CD14-positive monocyte (primary cell): ENCODE measurements at regions of chr14 and their contacts with region 1.

Region 1: DNA sequence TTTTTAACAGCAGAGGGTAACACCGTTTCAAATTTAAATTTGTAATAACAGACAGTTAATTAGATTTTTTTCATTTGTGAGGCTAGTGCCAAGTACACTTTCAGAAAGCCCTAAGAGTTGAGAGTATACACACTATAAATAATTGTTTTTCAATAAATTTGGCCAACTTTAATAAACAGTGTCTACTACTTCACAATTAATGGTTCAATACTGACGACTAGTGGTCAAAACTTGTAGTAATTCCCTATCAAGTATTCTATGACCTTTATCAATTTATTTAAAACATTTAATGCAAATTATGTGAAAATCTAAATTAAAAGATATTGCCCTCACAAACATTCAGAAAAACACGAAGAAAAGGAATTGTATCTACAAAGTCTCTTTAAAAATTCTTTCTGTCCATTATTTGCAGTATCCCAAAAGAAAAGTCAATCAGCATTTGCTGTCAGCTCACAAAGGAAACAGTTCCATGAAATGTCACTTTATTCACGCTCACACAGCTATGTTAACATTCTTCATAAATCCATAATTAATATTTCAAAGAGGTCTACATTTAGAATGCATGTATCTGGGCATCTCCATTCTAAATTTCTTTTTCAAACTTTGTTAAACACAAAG is 91.2 kb downstream of the CEP128 start:
- DNase-seq: peak in 2 of 3 donors; percentile 3 to 30
- H3K4me3 ChIP-seq: no peak overlapping the region
- H3K4me3 Mint-ChIP-seq: no peak overlapping the region
- H3K27ac ChIP-seq: no peak overlapping the region
- H3K27ac Mint-ChIP-seq: no peak overlapping the region
- H3K4me1 ChIP-seq: no peaks in the 10 kb centered on the region
- H3K4me1 Mint-ChIP-seq: no peaks in the 10 kb centered on the region
- H3K27me3 ChIP-seq: no peaks in the 10 kb centered on the region
- H3K27me3 Mint-ChIP-seq: no peaks in the 10 kb centered on the region
- CTCF ChIP-seq: peak; percentile 83

Region 2: DNA sequence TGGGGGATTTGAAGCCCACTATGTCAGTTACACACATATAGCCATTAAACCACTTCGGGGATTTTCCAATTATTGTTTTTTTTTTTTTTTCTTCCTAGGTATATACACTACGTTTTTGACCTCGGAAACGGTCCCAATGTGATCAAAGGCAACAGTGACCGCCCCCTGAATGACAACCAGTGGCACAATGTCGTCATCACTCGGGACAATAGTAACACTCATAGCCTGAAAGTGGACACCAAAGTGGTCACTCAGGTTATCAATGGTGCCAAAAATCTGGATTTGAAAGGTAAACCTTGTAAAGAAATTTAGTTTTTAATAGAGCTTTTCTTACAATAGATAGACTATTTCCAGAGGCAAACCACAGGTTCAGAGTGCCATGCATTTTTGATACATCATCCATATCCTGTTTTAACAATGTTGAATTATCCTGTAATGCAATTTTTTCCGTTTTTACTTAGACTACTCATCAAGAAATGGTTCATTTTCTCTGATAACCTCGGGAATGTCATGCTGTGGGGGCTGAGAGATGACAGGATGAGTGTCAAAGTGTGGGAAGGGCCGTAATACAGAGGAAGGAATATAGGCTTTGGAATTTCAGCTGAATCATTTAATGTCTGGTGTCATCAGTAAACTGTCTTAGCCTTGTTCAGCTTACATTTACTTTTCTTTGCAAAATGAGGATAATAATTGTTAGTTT is 1883.0 kb before region 1 on chr14:
- intact Hi-C with region 1: loop called (anchors 5 to 10 kb)
- DNase-seq: no peak
- H3K4me3 ChIP-seq: no peak overlapping the region
- H3K4me3 Mint-ChIP-seq: no peak overlapping the region
- H3K27ac ChIP-seq: no peak overlapping the region
- H3K27ac Mint-ChIP-seq: no peak overlapping the region
- H3K4me1 ChIP-seq: no peaks in the 10 kb centered on the region
- H3K4me1 Mint-ChIP-seq: peaks cover 3% of the 10 kb centered on the region
- H3K27me3 ChIP-seq: no peaks in the 10 kb centered on the region
- H3K27me3 Mint-ChIP-seq: peaks cover 2 to 5% (median 3%) of the 10 kb centered on the region in 3 donors
- CTCF ChIP-seq: no peak

Region 3: DNA sequence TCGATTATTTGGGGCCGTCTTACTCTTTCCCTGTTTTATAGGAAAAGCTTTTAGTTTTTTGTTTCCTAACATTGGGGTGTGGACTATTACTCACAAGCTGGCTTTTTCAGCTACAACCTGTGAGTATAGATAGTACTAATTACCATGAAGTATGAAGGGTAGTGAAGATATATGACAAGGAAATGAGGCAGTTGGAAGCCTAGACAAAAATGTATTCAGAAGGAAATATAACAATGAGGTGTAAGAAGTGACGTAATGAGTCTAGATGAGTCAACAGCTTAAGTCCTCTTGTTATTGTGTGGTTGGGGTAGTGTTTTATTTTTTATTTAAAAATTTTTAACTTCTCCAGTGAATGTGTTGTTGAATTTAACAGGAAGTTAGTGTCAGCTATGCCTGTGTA is 1875.6 kb before region 1 on chr14:
- intact Hi-C with region 1: loop called (anchors 5 to 10 kb)
- DNase-seq: no peak
- H3K4me3 ChIP-seq: no peak overlapping the region
- H3K4me3 Mint-ChIP-seq: no peak overlapping the region
- H3K27ac ChIP-seq: no peak overlapping the region
- H3K27ac Mint-ChIP-seq: no peak overlapping the region
- H3K4me1 ChIP-seq: no peaks in the 10 kb centered on the region
- H3K4me1 Mint-ChIP-seq: no peaks in the 10 kb centered on the region
- H3K27me3 ChIP-seq: no peaks in the 10 kb centered on the region
- H3K27me3 Mint-ChIP-seq: peaks cover 0 to 3% (median 2%) of the 10 kb centered on the region in 3 donors
- CTCF ChIP-seq: no peak

Region 4: GRCh38 chr14:80718940-80719339 is 131.4 kb before region 1 on chr14:
- intact Hi-C with region 1: no loop called
- DNase-seq: no peak
- H3K4me3 ChIP-seq: no peak overlapping the region
- H3K4me3 Mint-ChIP-seq: no peak overlapping the region
- H3K27ac ChIP-seq: no peak overlapping the region
- H3K27ac Mint-ChIP-seq: no peak overlapping the region
- H3K4me1 ChIP-seq: no peaks in the 10 kb centered on the region
- H3K4me1 Mint-ChIP-seq: no peaks in the 10 kb centered on the region
- H3K27me3 ChIP-seq: no peaks in the 10 kb centered on the region
- H3K27me3 Mint-ChIP-seq: peaks cover 0 to 1% (median 0%) of the 10 kb centered on the region in 3 donors
- CTCF ChIP-seq: no peak